Right lobe of liver (tissue), 6 donors: ENCODE measurements at regions of chr6 and their contacts with region 1.

Region 1: DNA sequence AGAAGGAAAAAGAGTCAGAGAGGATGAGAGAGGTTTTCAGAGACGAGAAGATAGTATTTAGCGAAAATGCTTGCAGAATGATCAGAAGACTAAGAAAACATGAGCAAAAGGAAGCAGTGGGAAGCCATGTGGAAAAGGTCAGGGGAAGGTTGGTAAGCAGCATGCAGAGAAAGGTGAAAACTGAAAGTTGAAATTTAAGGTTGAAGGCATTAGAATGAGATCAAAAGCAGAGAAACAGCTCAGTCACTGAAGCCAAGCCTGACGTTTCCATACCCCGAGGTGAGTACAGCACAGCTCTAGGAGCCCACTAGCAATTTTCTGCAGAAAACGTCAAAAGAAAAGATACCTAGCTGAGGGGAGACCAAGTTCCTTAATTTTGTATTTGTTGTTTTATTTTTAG is 19.1 kb upstream of the TFB1M start:
- DNase-seq: no peak
- ATAC-seq: no peak
- H3K4me3 ChIP-seq: no peak overlapping the region
- H3K27ac ChIP-seq: no peak overlapping the region
- H3K4me1 ChIP-seq: no peaks in the 10 kb centered on the region
- H3K27me3 ChIP-seq: no peaks in the 10 kb centered on the region
- CTCF ChIP-seq: no peak
- POLR2A ChIP-seq: no peak

Region 2: DNA sequence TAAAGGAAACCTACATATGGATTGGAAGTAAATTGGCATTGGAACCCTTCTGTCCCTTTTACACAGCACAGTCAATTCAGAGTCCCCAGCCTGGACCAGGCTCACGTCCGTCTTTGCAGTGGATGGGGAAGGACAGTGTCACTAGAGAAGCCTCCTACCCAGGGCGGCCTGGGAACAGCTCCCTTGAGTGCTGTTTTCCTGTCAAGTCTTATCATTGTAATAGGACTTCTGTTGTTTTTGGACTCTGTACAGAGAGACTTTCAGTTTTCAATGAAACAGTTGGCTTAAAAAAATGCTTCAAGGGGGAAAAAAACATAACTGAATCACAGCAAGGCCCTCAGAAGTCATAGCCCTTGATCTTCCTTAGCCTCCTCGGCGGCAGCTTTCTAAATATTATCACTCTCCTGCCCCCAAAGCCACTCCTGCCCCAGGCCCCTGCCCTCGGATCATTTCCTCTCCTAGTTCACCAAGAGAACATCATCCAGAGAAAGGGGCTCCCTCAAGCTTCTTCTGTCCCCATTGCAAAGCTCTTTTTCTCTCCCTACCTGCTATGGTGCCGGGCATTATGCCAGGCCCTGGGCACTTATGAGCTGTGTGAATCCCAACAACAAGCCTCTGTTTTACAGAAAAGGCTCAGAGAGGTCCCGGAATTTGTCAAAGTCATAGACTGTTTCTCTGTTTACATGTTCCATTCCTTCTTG is 785.1 kb before region 1 on chr6:
- intact Hi-C with region 1: no loop called
- DNase-seq: peak in 1 of 3 donors; percentile 35
- ATAC-seq: peak; percentile 76 to 97 (median 87)
- H3K4me3 ChIP-seq: no peak overlapping the region
- H3K27ac ChIP-seq: peak overlapping the region in 1 of 3 donors; percentile 30
- H3K4me1 ChIP-seq: no peaks in the 10 kb centered on the region
- H3K27me3 ChIP-seq: no peaks in the 10 kb centered on the region
- CTCF ChIP-seq: no peak
- POLR2A ChIP-seq: no peak

Region 3: DNA sequence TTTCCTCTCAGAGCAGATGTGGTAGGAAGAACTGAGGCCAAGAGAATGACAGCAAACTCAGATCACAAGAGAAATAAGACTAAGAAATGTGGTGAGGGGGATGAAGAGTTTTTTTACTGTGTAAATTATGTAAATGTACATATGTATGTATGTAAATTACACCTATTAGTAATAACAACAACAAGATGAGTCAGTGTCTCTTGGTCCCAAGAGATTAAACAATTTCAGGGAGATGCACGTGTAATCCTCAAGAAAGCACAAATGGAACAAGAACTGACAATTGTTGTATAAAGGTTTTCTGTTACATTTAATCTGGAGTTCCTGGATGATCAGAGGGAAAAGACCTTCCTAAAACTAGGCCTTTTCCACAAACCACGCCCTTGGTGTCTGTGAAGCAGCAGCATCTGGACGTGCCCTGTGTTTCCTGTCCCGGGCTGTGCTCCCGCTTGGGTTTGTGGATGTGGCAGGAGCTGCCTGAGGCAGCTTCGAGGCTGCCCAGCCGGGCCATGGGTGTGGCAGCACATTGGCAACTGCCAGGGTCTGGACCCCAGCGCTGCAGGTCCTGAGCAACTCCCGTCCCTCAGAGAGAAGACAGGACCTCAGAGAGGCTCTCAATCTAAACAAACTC is 68.6 kb before region 1 on chr6:
- intact Hi-C with region 1: no loop called
- DNase-seq: no peak
- ATAC-seq: no peak
- H3K4me3 ChIP-seq: no peak overlapping the region
- H3K27ac ChIP-seq: no peak overlapping the region
- H3K4me1 ChIP-seq: no peaks in the 10 kb centered on the region
- H3K27me3 ChIP-seq: no peaks in the 10 kb centered on the region
- CTCF ChIP-seq: no peak
- POLR2A ChIP-seq: no peak

Region 4: GRCh38 chr6:155528982-155529453 is 195.6 kb after region 1 on chr6:
- intact Hi-C with region 1: loop called in 1 of 2 experiments (anchors 10 kb)
- DNase-seq: no peak
- ATAC-seq: peak; percentile 46 to 93 (median 60)
- H3K4me3 ChIP-seq: no peak overlapping the region
- H3K27ac ChIP-seq: peak overlapping the region in 1 of 3 donors; percentile 1
- H3K4me1 ChIP-seq: no peaks in the 10 kb centered on the region
- H3K27me3 ChIP-seq: no peaks in the 10 kb centered on the region
- CTCF ChIP-seq: no peak
- POLR2A ChIP-seq: no peak